Cardiac septum (tissue), 1 donor: ENCODE measurements at regions of chr17 and their contacts with region 1.

Region 1: DNA sequence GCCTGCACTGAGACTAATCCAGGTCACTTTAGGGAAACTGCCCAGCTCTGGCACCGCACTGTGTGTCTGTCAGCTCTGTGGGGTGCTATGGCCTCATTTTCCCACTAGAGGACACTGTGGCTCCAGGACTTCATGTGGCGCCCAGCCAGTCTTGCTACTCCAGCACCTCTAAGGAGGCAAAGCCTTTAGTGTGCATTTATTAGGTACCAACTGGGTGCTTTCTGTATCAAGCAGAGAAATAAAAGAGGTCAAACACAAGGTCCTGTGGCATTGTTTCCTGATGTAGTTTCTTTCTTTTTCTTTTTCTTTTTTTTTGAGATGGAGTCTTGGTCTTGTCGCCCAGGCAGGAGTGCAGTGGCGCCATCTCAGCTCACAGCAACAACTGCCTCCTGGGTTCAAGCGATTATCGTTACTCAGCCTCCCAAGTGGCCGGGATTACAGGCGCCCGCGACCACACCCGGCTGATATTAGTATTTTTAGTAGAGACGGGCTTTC is 12.5 kb upstream of the RHBDL3 start:
- DNase-seq: peak; percentile 87

Region 2: GRCh38 chr17:32319548-32319905 is 66.4 kb after region 1 on chr17:
- intact Hi-C with region 1: loop called (anchors 1 kb)
- DNase-seq: peak; percentile 91

Region 3: DNA sequence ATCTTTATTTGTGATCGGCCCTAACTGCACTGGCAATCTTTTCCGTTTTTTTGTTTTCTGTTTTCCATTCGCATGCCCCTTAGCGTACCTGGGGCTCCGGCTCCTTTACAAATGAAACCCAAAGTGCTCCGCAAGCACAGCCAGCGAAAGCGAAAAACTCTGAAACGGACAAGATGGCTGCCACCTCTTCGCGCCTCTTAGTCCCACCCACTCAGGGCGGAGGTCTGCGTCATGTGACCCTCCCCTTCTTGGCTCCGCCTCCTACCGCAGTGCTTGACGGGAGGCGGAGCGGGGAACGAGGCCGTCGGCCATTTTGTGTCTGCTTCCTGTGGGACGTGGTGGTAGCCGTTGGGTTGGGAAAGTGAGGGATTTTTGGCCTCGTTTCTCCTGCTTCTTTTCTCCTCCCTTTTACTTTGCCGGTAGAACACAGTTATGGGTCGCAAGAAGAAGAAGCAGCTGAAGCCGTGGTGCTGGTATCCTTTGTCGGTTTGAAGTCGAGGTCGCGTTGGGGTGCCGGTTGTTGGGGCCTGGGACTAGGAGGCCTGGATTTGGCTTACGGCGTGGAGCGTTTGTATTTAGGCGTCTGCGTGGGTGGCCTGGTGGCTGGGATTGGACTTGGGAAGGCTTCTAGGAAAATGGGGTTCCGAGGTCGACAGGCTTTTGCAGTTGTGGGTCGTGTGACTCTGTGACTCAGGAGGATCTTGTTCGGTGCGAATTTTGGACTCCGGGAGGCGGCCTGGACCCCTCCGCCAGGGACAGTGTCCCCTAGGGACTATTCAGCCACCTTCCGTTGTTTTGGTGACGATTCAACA is 96.9 kb after region 1 on chr17 and contains the start of gene ZNF207:
- intact Hi-C with region 1: no loop called
- DNase-seq: peak; percentile 98
- total RNA-seq, gene ZNF207: 83.7 TPM